Heart left ventricle (tissue), 16 donors: ENCODE measurements at regions of chr1 and their contacts with region 1.

Region 1: DNA sequence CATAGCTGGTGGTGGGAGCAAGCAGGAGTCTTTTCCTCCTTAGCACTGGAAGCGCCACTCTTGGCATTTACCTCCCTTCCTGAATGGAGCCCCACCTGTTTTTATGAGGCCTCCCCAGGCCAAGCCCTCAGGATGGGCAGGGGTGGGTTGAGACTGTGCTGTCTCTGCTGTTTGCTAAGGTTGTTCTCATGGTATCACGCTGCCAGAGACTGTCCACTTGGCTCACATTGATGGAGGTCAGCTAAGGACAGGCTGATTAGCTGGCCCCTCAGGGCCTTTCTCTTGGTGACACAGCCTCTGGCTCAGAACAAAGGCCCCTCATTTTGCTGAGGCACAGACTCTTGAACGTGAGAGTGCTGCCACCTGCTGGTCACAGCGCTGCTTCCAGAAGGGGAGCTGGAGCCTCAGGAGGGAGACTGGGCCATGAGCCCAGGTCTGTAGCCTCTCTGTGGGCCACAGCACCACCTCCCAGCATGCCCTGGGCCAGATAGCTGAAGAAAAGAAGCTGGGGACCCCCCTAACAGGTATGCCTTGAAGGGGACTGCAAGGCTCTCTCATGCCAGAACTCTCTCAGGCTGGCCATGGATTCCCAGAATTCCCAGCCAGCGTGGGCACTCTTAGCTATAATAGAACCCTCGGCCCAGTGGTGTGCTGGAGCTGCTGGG is 85.6 kb downstream of the CD58 start:
- DNase-seq: peak; percentile 86 to 93 (median 92)
- ATAC-seq: peak; percentile 50 to 91 (median 82)
- H3K4me3 ChIP-seq: no peak overlapping the region
- H3K27ac ChIP-seq: peak overlapping the region in 3 of 12 donors; percentile 11 to 63 (median 29)
- H3K4me1 ChIP-seq: peaks cover 4 to 36% (median 22%) of the 10 kb centered on the region in 12 donors
- H3K27me3 ChIP-seq: no peaks in the 10 kb centered on the region
- CTCF ChIP-seq: peak; percentile 84 to 97 (median 92)
- POLR2A ChIP-seq: no peak

Region 2: DNA sequence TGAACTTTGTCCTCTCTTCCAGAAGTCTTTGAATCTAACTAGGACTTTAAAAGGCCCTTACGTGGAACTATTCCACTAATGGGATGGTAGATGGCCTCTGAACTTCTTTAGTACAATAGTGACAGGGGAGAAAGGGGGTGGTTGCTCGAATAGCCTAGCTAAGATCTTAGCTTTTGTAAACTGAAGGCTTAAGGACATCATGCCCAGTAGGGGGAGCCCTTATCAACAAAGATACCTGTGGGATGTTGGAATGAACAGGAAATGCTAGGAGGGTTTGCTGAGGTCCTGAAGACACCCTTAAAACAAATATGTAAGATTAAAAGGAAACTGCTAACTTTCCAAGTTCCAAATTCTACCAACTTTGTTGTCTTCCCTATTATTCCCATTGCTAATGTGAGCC is 677.5 kb before region 1 on chr1:
- intact Hi-C with region 1: loop called in 3 of 10 experiments (anchors 10 kb)
- DNase-seq: peak in 3 of 5 donors; percentile 35 to 48 (median 36)
- ATAC-seq: peak in 3 of 4 donors; percentile 66 to 76 (median 70)
- H3K4me3 ChIP-seq: no peak overlapping the region
- H3K27ac ChIP-seq: no peak overlapping the region
- H3K4me1 ChIP-seq: peaks cover 0 to 9% (median 0%) of the 10 kb centered on the region in 12 donors
- H3K27me3 ChIP-seq: peaks cover 0 to 9% (median 0%) of the 10 kb centered on the region in 9 donors
- CTCF ChIP-seq: peak; percentile 55 to 77 (median 68)
- POLR2A ChIP-seq: no peak

Region 3: DNA sequence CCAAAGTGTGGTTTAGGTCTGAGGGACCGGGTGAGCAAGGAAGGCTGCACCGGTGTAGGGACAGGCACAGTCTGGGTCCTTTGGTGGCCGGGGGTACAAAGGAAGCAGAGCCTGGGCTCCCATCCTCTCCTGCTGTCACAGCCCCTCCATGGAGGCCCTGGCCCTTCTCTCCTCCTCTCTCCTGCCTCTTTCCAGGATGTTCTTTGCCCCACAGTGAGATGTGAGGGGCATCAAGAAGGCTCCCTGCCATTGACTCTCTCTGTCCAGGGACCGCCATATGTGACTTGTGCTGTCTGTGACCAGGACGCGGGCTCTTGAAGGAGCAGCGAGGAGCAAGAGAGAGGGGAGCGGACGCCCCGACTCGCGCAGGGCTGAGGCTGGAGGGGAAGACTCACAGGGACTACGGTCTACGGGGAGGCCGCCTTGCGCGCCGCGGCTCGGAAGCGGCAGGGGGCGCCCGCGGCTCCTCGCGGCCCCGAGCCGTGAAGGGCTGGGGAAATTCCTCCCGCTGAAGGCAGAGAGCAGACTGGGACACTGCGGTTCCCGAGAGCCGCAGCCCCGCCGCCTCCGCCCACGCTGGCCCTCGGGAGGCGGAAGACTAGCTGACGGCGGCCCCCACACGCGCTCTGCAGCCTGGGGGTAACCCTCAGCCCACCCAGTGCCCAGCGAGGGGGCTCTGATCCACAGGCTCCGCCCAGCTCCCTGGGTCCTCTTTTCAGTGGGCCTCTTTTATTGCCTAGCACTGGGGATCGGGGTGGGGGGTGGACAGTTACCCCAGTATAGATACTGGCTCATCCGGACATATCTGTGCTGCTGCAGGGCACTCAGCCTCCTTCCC is 333.2 kb before region 1 on chr1:
- intact Hi-C with region 1: loop called in 8 of 10 experiments (anchors 1 to 5 kb)
- DNase-seq: peak; percentile 77 to 86 (median 79)
- ATAC-seq: peak; percentile 60 to 98 (median 94)
- H3K4me3 ChIP-seq: peak overlapping the region in 10 of 12 donors; percentile 38 to 65 (median 54)
- H3K27ac ChIP-seq: peak overlapping the region; percentile 3 to 87 (median 70)
- H3K4me1 ChIP-seq: peaks cover 0 to 27% (median 12%) of the 10 kb centered on the region in 12 donors
- H3K27me3 ChIP-seq: no peaks in the 10 kb centered on the region
- CTCF ChIP-seq: peak; percentile 85 to 98 (median 96)
- POLR2A ChIP-seq: peak in 1 of 2 donors; percentile 24

Region 4: DNA sequence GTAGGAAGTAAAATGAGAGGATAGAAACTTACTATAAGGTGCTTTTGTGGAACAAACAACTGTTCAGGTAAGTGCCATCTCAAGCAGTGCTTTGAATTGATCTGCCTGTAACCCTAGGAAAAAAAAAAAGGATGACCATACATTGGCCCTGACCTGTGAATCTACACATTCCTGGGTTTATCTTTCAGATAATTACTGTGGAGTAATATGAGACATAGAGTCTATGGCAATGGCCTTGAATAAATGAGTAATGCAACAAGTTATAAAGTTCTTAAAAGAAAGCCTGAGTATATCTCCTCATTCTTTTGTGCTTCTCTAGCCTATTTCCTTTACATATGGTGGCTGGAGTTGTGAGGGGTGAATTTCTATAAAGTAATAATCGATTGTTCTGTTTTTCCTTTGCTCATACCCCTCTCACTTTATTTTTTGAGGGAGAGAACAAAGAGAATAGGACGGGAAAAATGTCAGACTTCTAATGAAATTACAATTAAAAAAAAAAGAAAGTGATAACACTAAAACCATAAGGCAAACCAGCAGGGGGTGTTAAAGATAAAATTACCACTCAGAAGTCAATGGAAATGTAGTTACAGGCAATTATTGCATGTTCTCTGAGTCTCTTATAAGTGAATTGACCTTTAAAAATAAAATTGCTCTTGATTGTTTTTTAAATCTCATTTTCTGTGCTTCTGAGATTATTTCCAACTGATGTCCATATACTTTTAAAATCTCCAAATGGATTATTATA is 124.6 kb before region 1 on chr1:
- intact Hi-C with region 1: loop called in 9 of 10 experiments (anchors 1 to 5 kb)
- DNase-seq: no peak
- ATAC-seq: no peak
- H3K4me3 ChIP-seq: no peak overlapping the region
- H3K27ac ChIP-seq: no peak overlapping the region
- H3K4me1 ChIP-seq: peaks cover 0 to 16% (median 6%) of the 10 kb centered on the region in 12 donors
- H3K27me3 ChIP-seq: no peaks in the 10 kb centered on the region
- CTCF ChIP-seq: peak; percentile 18 to 54 (median 45)
- POLR2A ChIP-seq: no peak

Region 5: GRCh38 chr1:116377541-116378529 is 107.4 kb before region 1 on chr1:
- intact Hi-C with region 1: loop called in 4 of 10 experiments (anchors 5 kb)
- DNase-seq: peak; percentile 68 to 85 (median 72)
- ATAC-seq: peak; percentile 32 to 52 (median 40)
- H3K4me3 ChIP-seq: peak overlapping the region in 10 of 12 donors; percentile 7 to 89 (median 82)
- H3K27ac ChIP-seq: peak overlapping the region; percentile 89 to 99 (median 97)
- H3K4me1 ChIP-seq: peaks cover 18 to 88% (median 82%) of the 10 kb centered on the region in 12 donors
- H3K27me3 ChIP-seq: no peaks in the 10 kb centered on the region
- CTCF ChIP-seq: no peak
- POLR2A ChIP-seq: no peak

Region 6: GRCh38 chr1:116514708-116515525 is 29.7 kb after region 1 on chr1:
- intact Hi-C with region 1: no loop called
- DNase-seq: no peak
- ATAC-seq: peak in 3 of 4 donors; percentile 7 to 17 (median 14)
- H3K4me3 ChIP-seq: no peak overlapping the region
- H3K27ac ChIP-seq: peak overlapping the region in 10 of 12 donors; percentile 13 to 90 (median 75)
- H3K4me1 ChIP-seq: peaks cover 0 to 41% (median 0%) of the 10 kb centered on the region in 12 donors
- H3K27me3 ChIP-seq: no peaks in the 10 kb centered on the region
- CTCF ChIP-seq: no peak
- POLR2A ChIP-seq: no peak

Region 7: GRCh38 chr1:116544588-116545358 is 59.6 kb after region 1 on chr1:
- intact Hi-C with region 1: no loop called
- DNase-seq: no peak
- ATAC-seq: peak in 1 of 4 donors; percentile 20
- H3K4me3 ChIP-seq: no peak overlapping the region
- H3K27ac ChIP-seq: peak overlapping the region in 1 of 12 donors; percentile 10
- H3K4me1 ChIP-seq: peaks cover 0 to 33% (median 0%) of the 10 kb centered on the region in 12 donors
- H3K27me3 ChIP-seq: no peaks in the 10 kb centered on the region
- CTCF ChIP-seq: no peak
- POLR2A ChIP-seq: no peak

Region 8: DNA sequence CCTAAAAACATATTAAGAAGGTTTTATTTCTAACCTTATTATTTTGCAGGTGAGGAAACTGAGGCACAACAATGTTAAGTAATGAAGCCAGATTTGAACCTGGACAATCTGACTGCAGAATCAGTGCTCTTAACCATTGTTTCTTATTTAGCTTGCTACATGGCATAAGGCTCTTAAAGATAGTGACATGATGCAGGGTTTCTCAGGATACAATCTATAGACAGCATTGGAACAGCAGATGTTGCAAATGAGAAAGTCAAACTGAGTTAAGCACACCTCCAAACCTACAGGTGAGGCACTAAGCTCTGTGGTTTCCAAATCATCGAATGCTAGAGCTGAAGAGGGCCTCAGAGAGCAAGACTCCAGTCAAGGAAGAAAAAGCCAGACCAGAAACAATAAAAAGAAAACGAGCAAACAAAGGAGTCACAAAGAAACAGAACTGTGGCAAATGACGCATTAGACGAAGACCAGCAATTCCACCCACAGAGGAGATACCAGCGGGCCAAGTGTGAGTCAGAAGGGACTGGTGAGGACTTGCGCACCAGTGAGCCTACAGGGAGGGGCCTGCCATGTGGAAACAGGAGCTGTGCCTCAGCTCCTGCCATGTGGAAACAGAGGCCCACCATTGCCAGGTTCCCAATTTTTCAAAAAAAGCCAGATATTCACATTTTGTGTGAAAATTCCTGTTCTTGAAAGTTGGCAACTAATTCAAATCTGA is 71.2 kb after region 1 on chr1:
- intact Hi-C with region 1: no loop called
- DNase-seq: peak in 3 of 5 donors; percentile 54 to 82 (median 72)
- ATAC-seq: peak; percentile 45 to 87 (median 80)
- H3K4me3 ChIP-seq: no peak overlapping the region
- H3K27ac ChIP-seq: peak overlapping the region in 8 of 12 donors; percentile 1 to 70 (median 14)
- H3K4me1 ChIP-seq: peaks cover 0 to 95% (median 34%) of the 10 kb centered on the region in 12 donors
- H3K27me3 ChIP-seq: no peaks in the 10 kb centered on the region
- CTCF ChIP-seq: no peak
- POLR2A ChIP-seq: no peak

Region 9: DNA sequence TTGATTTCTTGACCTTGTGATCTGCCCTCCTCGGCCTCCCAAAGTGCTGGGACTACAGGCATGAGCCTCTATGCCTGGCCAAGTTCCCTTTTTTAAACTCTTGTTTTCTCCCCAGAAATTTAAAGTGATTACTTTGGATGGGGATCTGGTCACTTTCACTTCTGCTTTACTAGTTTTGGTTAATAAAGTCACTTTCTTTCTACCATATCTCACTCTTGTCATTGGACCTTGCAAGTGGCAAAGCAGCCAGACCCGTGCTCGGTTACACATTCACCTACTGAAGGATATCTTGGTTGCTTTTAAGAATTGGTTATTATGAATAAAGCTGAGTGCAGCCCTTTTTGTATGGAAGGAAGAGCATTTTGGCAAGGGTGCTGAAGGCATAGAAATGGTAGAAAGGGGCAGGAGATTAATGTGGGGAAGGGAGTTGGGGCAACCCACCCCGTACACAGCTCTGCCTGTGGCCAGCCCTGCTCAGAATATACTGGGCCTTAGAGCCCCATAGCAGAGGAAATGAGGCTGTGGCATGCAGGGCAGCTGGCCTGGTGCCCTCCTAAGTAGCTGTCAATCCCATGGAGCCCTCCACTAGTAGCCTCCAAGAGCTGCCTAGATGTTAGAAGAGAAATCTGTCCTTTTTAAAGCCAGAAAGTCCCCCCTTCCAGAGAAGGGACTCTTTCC is 309.7 kb after region 1 on chr1:
- intact Hi-C with region 1: no loop called
- DNase-seq: no peak
- ATAC-seq: no peak
- H3K4me3 ChIP-seq: no peak overlapping the region
- H3K27ac ChIP-seq: peak overlapping the region in 1 of 12 donors; percentile 12
- H3K4me1 ChIP-seq: peaks cover 0 to 23% (median 0%) of the 10 kb centered on the region in 12 donors
- H3K27me3 ChIP-seq: peaks cover 0 to 14% (median 0%) of the 10 kb centered on the region in 9 donors
- CTCF ChIP-seq: no peak
- POLR2A ChIP-seq: no peak